ENCODE measurements at regions of chr4 and their contacts with region 1.

Region 1: GRCh38 chr4:138277133-138277532 is 35.0 kb upstream of the SLC7A11 start:
- DNase-seq: no peak
- H3K4me3 ChIP-seq: no peak overlapping the region
- H3K27ac ChIP-seq: no peak overlapping the region
- H3K4me1 ChIP-seq: peaks cover 12% of the 10 kb centered on the region
- H3K27me3 ChIP-seq: no peaks in the 10 kb centered on the region
- CTCF ChIP-seq: no peak

Region 2: GRCh38 chr4:138297743-138298405 is 20.7 kb after region 1 on chr4:
- CTCF ChIA-PET with region 1: no interaction called
- POLR2A ChIA-PET with region 1: no interaction called
- intact Hi-C with region 1: loop called (anchors 2 kb)
- DNase-seq: no peak
- H3K4me3 ChIP-seq: no peak overlapping the region
- H3K27ac ChIP-seq: no peak overlapping the region
- H3K4me1 ChIP-seq: no peaks in the 10 kb centered on the region
- H3K27me3 ChIP-seq: no peaks in the 10 kb centered on the region
- CTCF ChIP-seq: no peak

Region 3: GRCh38 chr4:138367942-138368341 is 90.8 kb after region 1 on chr4:
- CTCF ChIA-PET with region 1: no interaction called
- POLR2A ChIA-PET with region 1: no interaction called
- intact Hi-C with region 1: no loop called
- DNase-seq: no peak
- H3K4me3 ChIP-seq: no peak overlapping the region
- H3K27ac ChIP-seq: no peak overlapping the region
- H3K4me1 ChIP-seq: no peaks in the 10 kb centered on the region
- H3K27me3 ChIP-seq: no peaks in the 10 kb centered on the region
- CTCF ChIP-seq: no peak